AG04450 (cell line): ENCODE measurements at regions of chr17 and their contacts with region 1.

Region 1: GRCh38 chr17:46212634-46213435 is 19.6 kb upstream of the KANSL1 start:
- DNase-seq: peak; percentile 54
- H3K4me3 ChIP-seq: no peak overlapping the region
- H3K27ac ChIP-seq: no peak overlapping the region
- H3K27me3 ChIP-seq: no peaks in the 10 kb centered on the region
- CTCF ChIP-seq: peak; percentile 78

Region 2: DNA sequence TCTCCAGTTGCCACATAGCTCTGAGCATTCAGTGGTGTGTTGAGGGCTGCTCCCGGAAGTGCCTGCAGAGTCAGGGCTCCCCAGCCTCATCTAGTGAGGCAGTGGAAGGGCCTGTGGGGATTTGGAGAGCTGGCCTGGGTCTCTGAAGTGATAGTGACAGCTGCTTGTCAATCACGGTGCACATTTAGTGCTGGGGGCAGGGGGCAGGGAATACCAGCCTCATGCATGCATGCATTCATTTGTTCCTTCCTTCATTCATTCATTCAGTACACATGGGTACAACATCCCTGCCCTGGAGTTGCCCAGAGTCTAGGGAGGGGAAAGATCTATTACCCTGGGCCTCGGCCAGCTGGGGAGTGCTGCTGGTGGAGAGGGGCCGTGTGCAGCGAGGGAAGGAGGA is 225.1 kb before region 1 on chr17:
- CTCF ChIA-PET with region 1: no interaction called
- POLR2A ChIA-PET with region 1: no interaction called
- DNase-seq: no peak
- H3K4me3 ChIP-seq: no peak overlapping the region
- H3K27ac ChIP-seq: no peak overlapping the region
- H3K27me3 ChIP-seq: peaks cover 22% of the 10 kb centered on the region
- CTCF ChIP-seq: no peak

Region 3: GRCh38 chr17:46002311-46002972 is 210.4 kb before region 1 on chr17:
- CTCF ChIA-PET with region 1: interaction called, 116 read pairs
- POLR2A ChIA-PET with region 1: no interaction called
- DNase-seq: peak; percentile 16
- H3K4me3 ChIP-seq: no peak overlapping the region
- H3K27ac ChIP-seq: no peak overlapping the region
- H3K27me3 ChIP-seq: peaks cover 4% of the 10 kb centered on the region
- CTCF ChIP-seq: peak; percentile 88

Region 4: GRCh38 chr17:46082257-46082656 is 130.6 kb before region 1 on chr17:
- CTCF ChIA-PET with region 1: no interaction called
- POLR2A ChIA-PET with region 1: no interaction called
- DNase-seq: no peak
- H3K4me3 ChIP-seq: no peak overlapping the region
- H3K27ac ChIP-seq: no peak overlapping the region
- H3K27me3 ChIP-seq: no peaks in the 10 kb centered on the region
- CTCF ChIP-seq: no peak

Region 5: GRCh38 chr17:46115699-46116098 is 97.1 kb before region 1 on chr17:
- CTCF ChIA-PET with region 1: no interaction called
- POLR2A ChIA-PET with region 1: no interaction called
- DNase-seq: no peak
- H3K4me3 ChIP-seq: no peak overlapping the region
- H3K27ac ChIP-seq: no peak overlapping the region
- H3K27me3 ChIP-seq: no peaks in the 10 kb centered on the region
- CTCF ChIP-seq: no peak

Region 6: DNA sequence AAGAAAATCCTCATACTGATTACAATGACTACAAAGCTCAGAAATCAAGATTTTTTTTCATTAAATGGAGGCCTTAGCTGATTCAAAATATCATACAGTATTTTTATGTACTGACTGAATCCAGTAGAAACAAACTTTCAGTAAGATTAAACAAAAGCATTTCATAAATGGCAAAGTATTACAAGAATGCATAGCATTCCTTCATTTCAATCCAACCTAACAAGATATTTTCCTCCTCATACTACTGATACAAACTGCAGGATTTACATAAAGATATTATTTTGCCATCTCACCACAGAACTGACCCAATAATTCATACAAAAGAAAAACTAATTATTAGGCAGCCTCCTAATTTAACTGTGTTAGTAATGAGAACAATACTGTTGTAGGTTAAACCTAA is 13.5 kb before region 1 on chr17:
- CTCF ChIA-PET with region 1: interaction called, 44 read pairs
- POLR2A ChIA-PET with region 1: no interaction called
- DNase-seq: no peak
- H3K4me3 ChIP-seq: no peak overlapping the region
- H3K27ac ChIP-seq: no peak overlapping the region
- H3K27me3 ChIP-seq: no peaks in the 10 kb centered on the region
- CTCF ChIP-seq: no peak